Sigmoid colon (tissue), 7 donors: ENCODE measurements at regions of chr2 and their contacts with region 1.

Region 1: DNA sequence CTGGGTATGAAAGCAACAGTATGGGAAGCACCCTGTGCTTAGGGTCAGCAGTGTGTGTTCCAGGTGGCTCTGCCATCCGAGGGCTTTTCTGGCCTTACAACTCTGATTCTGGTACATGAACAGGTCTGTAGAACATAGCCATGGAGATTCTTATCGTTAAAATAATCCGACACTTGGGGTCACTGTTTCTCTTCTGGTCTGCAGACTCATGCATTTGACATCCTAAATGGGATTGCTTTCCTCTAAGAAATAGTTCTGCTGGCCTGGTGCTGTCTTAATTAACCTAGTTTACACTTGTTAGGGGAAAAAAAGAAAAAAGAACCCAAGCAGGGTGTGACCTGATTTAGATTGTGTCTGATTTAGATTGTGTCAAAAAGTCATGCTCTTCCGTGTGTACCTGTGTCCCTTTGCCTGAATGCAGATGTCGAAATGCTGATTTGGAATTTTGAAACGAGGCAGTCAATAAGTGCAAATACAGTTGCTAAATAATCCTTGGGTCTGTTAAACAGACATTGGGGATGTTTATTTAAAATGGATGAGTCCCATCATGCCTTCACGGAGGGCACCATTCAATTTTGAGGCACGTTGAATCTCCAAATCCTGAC is 59.6 kb downstream of the TRPM8 start:
- DNase-seq: no peak
- H3K4me3 ChIP-seq: no peak overlapping the region
- H3K27ac ChIP-seq: no peak overlapping the region
- H3K4me1 ChIP-seq: no peaks in the 10 kb centered on the region
- H3K27me3 ChIP-seq: peaks cover 0 to 15% (median 0%) of the 10 kb centered on the region in 3 donors
- CTCF ChIP-seq: peak in 2 of 4 experiments; percentile 7 to 11
- EP300 ChIP-seq: no peak
- POLR2A ChIP-seq: no peak

Region 2: DNA sequence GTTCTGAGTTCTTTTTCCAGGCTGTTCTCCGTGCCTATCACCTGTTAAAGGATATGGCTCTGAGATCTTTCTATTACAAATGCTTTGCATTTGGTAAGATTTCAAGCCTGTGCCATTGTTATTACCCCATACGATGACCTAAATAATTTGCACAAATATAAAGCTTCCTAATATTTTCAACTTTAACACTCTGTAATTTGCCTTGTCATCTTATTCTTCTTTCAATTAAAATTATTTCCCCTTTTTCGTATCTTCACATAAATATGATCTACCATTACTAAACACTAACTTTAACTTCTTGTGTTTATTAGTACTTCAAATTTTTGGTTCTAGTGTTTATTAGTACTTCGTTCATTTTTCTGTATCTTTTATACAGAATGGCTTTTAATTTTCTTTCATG is 105.4 kb before region 1 on chr2:
- intact Hi-C with region 1: no loop called
- DNase-seq: no peak
- H3K4me3 ChIP-seq: no peak overlapping the region
- H3K27ac ChIP-seq: no peak overlapping the region
- H3K4me1 ChIP-seq: no peaks in the 10 kb centered on the region
- H3K27me3 ChIP-seq: no peaks in the 10 kb centered on the region
- CTCF ChIP-seq: no peak
- EP300 ChIP-seq: no peak
- POLR2A ChIP-seq: no peak

Region 3: DNA sequence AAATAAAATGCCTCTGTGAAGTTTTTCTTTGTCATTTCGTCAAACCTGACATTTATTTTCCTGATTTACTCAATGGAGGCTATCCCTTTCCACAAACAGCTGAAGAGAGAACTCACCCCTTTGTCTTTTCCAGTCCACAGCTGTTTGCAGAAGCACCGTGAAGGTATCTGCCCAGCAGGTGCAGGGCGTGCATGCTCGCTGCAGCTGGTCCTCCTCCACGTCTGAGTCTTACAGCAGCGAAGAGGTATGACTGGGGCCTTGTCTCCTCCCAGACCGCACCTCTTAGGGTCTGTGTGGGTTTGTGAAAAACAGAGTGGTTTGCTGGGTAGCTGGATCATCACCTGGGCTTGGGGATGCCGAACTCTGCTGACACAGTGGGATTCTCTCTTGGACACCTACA is 83.4 kb after region 1 on chr2:
- intact Hi-C with region 1: no loop called
- DNase-seq: no peak
- H3K4me3 ChIP-seq: no peak overlapping the region
- H3K27ac ChIP-seq: no peak overlapping the region
- H3K4me1 ChIP-seq: no peaks in the 10 kb centered on the region
- H3K27me3 ChIP-seq: peaks cover 0 to 4% (median 0%) of the 10 kb centered on the region in 3 donors
- CTCF ChIP-seq: no peak
- EP300 ChIP-seq: no peak
- POLR2A ChIP-seq: no peak

Region 4: DNA sequence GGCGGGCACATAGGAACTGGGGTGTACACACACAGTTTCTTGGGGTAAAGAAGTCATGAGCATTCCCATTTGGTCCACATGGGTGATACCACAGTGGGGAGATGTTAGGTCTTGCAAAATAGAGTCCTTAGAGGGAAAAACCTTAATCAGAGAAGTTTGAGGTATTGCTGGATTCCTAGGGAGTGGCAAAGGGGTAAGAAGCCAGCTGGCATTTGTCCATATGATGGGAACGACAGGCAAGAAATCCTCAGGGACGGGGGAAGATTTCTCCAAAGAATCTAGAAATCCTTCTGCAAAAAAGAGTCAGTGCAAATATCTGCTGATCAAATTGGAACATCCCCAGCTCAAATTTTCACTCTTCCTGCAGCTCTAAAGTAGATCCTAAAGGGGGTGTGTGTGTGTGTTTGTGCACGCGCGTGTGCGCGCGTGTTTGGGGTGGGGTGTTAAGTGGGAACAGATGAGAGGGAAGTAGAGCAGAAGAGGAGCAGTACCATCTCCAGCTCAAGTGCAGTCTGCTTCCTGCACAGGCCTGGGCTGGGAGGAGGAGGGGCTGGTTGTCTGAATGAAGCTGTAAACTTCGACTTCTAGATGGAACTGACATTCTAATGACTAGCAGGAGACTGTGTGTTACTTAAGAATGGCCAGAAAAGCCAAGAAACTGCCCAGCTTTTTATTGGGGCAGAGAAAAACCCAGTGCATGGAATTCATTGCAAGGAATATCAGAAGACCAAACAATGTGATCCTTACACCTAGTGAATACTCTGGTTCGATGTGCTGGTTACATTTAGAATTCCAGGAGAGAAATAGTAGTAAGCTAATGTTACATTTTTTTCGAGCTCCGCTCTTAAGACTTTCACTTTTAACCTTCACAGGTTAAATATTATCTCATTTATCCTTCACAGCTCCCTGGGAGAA is 241.7 kb after region 1 on chr2:
- intact Hi-C with region 1: no loop called
- DNase-seq: no peak
- H3K4me3 ChIP-seq: no peak overlapping the region
- H3K27ac ChIP-seq: no peak overlapping the region
- H3K4me1 ChIP-seq: no peaks in the 10 kb centered on the region
- H3K27me3 ChIP-seq: peaks cover 0 to 10% (median 0%) of the 10 kb centered on the region in 3 donors
- CTCF ChIP-seq: no peak
- EP300 ChIP-seq: no peak
- POLR2A ChIP-seq: no peak

Region 5: GRCh38 chr2:234288974-234289455 is 312.2 kb after region 1 on chr2:
- intact Hi-C with region 1: loop called (anchors 10 kb)
- DNase-seq: peak; percentile 80
- H3K4me3 ChIP-seq: no peak overlapping the region
- H3K27ac ChIP-seq: no peak overlapping the region
- H3K4me1 ChIP-seq: no peaks in the 10 kb centered on the region
- H3K27me3 ChIP-seq: no peaks in the 10 kb centered on the region
- CTCF ChIP-seq: peak; percentile 50 to 68 (median 62)
- EP300 ChIP-seq: no peak
- POLR2A ChIP-seq: no peak

Region 6: GRCh38 chr2:234500394-234501006 is 523.7 kb after region 1 on chr2:
- intact Hi-C with region 1: loop called (anchors 5 kb)
- DNase-seq: no peak
- H3K4me3 ChIP-seq: no peak overlapping the region
- H3K27ac ChIP-seq: no peak overlapping the region
- H3K4me1 ChIP-seq: peaks cover 0 to 14% (median 11%) of the 10 kb centered on the region in 4 donors
- H3K27me3 ChIP-seq: peaks cover 0 to 2% (median 0%) of the 10 kb centered on the region in 3 donors
- CTCF ChIP-seq: peak in 3 of 4 experiments; percentile 27 to 38 (median 30)
- EP300 ChIP-seq: no peak
- POLR2A ChIP-seq: no peak

Region 7: GRCh38 chr2:234544659-234545611 is 568.1 kb after region 1 on chr2:
- intact Hi-C with region 1: loop called (anchors 2 kb)
- DNase-seq: peak; percentile 76
- H3K4me3 ChIP-seq: no peak overlapping the region
- H3K27ac ChIP-seq: no peak overlapping the region
- H3K4me1 ChIP-seq: no peaks in the 10 kb centered on the region
- H3K27me3 ChIP-seq: peaks cover 0 to 11% (median 0%) of the 10 kb centered on the region in 3 donors
- CTCF ChIP-seq: peak; percentile 62 to 91 (median 77)
- EP300 ChIP-seq: no peak
- POLR2A ChIP-seq: no peak

Region 8: DNA sequence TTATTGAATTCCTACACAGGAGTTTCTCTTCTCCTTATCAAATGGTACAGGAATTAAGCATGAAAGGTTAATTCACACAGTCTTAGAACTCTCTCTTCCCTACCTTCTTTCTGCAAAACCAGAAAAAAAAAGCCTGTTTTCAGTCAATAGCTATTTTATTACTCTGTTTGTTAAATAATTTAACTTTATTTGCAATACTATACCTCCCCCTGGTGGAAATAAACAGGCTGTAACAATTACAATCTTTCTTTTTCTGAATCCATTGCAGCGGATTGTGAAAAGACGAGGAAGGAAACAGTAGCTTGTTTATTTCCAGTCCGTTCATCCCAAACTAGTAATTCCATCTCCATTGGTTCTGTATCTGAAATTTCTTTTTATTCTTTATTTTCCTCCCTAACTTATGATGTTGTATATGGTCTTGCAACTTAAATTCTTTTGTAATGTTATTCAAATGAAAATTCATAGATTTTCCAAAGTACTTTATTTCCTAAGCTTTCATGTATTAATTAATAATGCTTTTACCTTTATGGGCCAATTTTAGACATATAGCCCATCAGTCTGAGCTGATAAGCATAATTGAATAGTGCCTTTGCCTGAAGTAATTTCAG is 1140.2 kb after region 1 on chr2:
- intact Hi-C with region 1: loop called (anchors 10 kb)
- DNase-seq: no peak
- H3K4me3 ChIP-seq: no peak overlapping the region
- H3K27ac ChIP-seq: no peak overlapping the region
- H3K4me1 ChIP-seq: no peaks in the 10 kb centered on the region
- H3K27me3 ChIP-seq: peaks cover 0 to 4% (median 0%) of the 10 kb centered on the region in 3 donors
- CTCF ChIP-seq: peak; percentile 40 to 65 (median 58)
- EP300 ChIP-seq: no peak
- POLR2A ChIP-seq: no peak